Heart left ventricle (tissue), 16 donors: ENCODE measurements at regions of chr12 and their contacts with region 1.

Region 1: DNA sequence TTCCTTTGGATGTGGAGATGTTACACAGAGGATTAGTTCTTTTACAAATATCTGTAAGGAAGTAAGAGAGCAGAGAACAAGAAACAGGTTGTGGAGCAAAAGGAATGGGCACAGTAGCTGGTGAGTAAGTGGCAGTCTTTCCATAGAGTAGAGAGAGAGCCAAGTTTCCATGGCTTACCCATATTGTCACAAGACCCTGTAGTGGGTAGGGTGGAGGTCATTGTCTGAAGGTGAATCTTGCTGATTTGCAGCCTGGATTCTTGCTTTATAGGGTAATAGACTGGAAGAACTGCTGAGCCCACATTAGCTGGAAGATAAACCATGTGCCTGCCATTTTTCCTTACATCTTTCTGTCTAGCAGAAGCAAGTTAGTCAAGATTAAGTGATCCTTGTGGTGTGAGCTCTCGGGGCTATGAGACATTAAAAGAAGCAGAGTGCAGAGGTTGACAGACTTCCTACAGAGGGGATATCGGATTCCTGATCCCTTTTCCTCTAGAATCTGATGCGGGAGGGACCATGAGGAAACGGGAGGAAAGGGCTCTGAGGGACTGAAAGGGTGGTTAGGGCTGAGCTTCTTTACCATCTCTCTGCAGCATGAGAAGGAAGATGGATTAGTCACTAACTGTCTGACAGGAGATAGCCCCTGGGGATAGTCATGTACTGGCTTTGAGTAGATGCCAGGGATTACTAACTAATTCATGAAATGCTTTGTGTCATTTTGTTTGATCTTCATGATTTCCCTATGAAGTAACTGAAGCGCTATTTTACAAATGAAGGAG is 44.0 kb upstream of the LRTM2 start:
- DNase-seq: no peak
- ATAC-seq: peak; percentile 33 to 76 (median 57)
- H3K4me3 ChIP-seq: no peak overlapping the region
- H3K27ac ChIP-seq: peak overlapping the region in 3 of 12 donors; percentile 1 to 34 (median 5)
- H3K4me1 ChIP-seq: peaks cover 0 to 52% (median 31%) of the 10 kb centered on the region in 12 donors
- H3K27me3 ChIP-seq: no peaks in the 10 kb centered on the region
- CTCF ChIP-seq: no peak
- POLR2A ChIP-seq: no peak

Region 2: GRCh38 chr12:1698638-1699214 is 77.6 kb before region 1 on chr12:
- intact Hi-C with region 1: loop called in 3 of 10 experiments (anchors 5 kb)
- DNase-seq: no peak
- ATAC-seq: no peak
- H3K4me3 ChIP-seq: no peak overlapping the region
- H3K27ac ChIP-seq: no peak overlapping the region
- H3K4me1 ChIP-seq: peaks cover 0 to 74% (median 19%) of the 10 kb centered on the region in 12 donors
- H3K27me3 ChIP-seq: no peaks in the 10 kb centered on the region
- CTCF ChIP-seq: no peak
- POLR2A ChIP-seq: no peak

Region 3: DNA sequence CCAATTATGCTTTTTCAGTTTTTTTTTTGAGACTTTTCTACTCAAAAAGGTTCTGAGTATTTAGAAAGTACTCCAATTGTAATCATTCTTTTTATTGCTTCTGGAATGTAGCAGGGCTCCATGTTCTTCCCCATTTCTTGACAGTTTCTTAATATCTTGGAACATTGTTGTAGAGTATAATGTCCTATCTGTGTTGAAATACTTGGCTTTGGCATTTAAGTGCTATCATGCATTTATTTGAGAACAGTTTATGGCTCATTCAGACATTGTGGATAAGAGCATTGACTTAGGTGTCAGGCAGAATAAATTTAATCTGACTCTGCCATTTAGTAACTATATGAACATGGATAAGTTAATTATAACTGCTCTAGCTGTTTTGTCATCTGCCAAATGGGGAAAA is 57.2 kb before region 1 on chr12:
- intact Hi-C with region 1: loop called in 1 of 10 experiments (anchors 10 kb)
- DNase-seq: no peak
- ATAC-seq: peak in 2 of 4 donors; percentile 27 to 50
- H3K4me3 ChIP-seq: no peak overlapping the region
- H3K27ac ChIP-seq: no peak overlapping the region
- H3K4me1 ChIP-seq: peaks cover 0 to 80% (median 30%) of the 10 kb centered on the region in 12 donors
- H3K27me3 ChIP-seq: no peaks in the 10 kb centered on the region
- CTCF ChIP-seq: no peak
- POLR2A ChIP-seq: no peak

Region 4: DNA sequence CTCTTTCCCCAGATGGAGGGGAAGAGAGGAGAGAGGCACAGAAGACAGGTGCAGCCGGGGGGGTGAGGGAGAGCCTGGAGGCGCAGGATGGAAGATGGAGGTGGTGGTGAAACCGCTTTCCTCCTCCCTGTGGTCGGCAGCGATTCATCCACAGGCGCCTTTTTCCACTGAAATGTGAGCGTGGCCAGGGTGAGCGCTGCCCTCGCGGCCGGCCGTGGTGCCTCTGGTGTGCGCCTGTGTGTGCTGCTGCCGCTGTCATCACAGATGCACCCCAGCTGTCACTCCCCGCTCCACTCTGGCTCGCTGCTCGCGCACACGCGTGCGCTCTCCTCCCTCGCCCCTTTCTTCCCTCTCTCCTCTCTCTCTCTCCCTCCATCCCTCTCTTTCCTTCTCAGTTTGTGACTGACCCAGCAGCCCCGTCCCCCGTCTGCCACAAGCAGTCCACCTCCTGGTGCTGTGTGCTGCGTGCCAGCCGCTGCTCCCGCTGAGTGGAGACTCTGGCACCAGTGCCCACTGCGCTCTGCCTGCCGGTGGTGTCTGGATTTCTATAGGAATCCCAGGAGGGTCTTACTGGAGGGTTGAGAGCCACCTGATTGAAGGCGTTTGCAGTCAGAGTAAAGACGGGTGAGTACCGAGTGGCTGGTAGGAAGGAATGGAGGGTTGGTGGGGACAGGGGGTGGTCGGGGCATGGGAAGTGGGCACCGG is 44.0 kb after region 1 on chr12 and contains the start of gene LRTM2:
- intact Hi-C with region 1: no loop called
- DNase-seq: no peak
- ATAC-seq: peak in 3 of 4 donors; percentile 9 to 43 (median 41)
- H3K4me3 ChIP-seq: no peak within 1 kb of the TSS
- H3K27ac ChIP-seq: no peak within 1 kb of the TSS
- H3K4me1 ChIP-seq: peaks cover 0 to 10% (median 0%) of the 10 kb centered on the region in 12 donors
- H3K27me3 ChIP-seq: peaks cover 11 to 66% (median 34%) of the 10 kb centered on the region in 9 donors
- CTCF ChIP-seq: no peak
- POLR2A ChIP-seq: no peak
- total RNA-seq, gene LRTM2: not detected